Activated T-helper 2 cell treated with anti-CD3 and anti-CD28 coated beads, Interferon-gamma antibody, Interleukin-2, Interleukin-4, amounts not matched to agents 10 μg/mL and 5 μg/mL and 100 μg/mL, durations not matched to agents 14 hours and 24 hours and 36 hours (primary cell): ENCODE measurements at regions of chr3 and their contacts with region 1.

Region 1: GRCh38 chr3:119469381-119470189 is 822 bp downstream of the POGLUT1 start:
- DNase-seq: no peak
- H3K4me3 Mint-ChIP-seq: peak overlapping the region; percentile 92
- H3K27ac Mint-ChIP-seq: peak overlapping the region; percentile 88
- H3K4me1 Mint-ChIP-seq: peaks cover 26% of the 10 kb centered on the region
- H3K27me3 Mint-ChIP-seq: no peaks in the 10 kb centered on the region

Region 2: GRCh38 chr3:119508172-119508845 is 38.7 kb after region 1 on chr3:
- intact Hi-C with region 1: loop called (anchors 2 kb)
- DNase-seq: peak; percentile 22
- H3K4me3 Mint-ChIP-seq: no peak overlapping the region
- H3K27ac Mint-ChIP-seq: peak overlapping the region; percentile 76
- H3K4me1 Mint-ChIP-seq: peaks cover 39% of the 10 kb centered on the region
- H3K27me3 Mint-ChIP-seq: no peaks in the 10 kb centered on the region